ENCODE measurements at regions of chr5 and their contacts with region 1.

Region 1: DNA sequence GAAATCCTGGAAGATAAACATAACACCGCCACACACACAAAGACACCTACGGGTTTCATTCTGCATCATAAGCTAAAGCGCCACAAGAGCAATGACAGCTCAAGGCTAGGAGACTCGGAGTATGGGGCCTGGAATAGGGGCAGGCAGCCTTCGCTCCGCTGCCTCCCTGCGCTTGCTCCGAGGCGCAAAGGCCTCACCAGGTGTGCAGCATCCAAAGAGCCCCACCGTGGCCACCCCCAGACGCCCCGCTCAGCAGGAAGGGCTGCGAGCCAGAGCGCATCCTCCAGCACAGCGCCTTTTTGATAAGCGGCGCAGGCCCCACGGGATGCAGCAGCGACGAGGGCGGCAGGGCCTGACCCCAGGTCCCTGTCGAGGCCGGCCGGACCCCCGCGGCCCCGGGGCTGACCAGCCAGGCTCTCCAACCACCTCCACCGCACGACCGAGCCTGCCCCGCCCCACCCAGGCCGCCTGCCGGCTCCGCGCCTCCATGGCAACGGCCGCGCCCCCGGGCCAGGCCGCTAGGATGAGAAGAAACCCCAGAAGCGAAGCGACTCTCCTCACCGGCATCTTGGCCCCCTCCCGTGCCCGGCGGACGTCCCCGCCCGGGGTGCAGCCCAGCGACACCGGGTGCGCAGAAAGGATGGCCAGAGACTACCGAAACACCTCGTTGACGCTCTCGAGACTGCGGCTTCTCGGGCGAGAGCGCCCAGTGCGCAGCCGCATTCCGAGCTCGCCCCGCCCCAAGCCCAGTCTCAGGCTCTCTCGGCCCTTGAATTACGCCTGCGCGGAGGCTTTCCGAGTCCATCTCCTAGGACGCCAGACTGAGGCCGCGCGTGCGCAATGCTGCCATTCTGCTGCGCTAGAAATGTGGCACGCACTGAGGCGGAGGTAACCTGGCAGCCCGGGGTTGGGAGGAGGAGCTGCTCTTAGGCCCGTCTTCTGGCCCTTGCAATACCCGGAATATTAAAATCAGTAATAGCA is at the start of gene KIF3A:
- DNase-seq: peak; percentile 99
- ATAC-seq: peak; percentile 100
- total RNA-seq, gene KIF3A: 10.2 TPM

Region 2: GRCh38 chr5:132386644-132387286 is 350.4 kb before region 1 on chr5:
- intact Hi-C with region 1: loop called (anchors 10 kb)
- DNase-seq: peak; percentile 88
- ATAC-seq: peak; percentile 84

Region 3: GRCh38 chr5:132777209-132778069 is 40.3 kb after region 1 on chr5 and contains the start of gene SEPTIN8:
- intact Hi-C with region 1: loop called (anchors 2 kb)
- DNase-seq: peak; percentile 76
- ATAC-seq: peak; percentile 62
- total RNA-seq, gene SEPTIN8: 28.5 TPM

Measured in Right ventricle myocardium inferior (tissue), 1 donor.